H1 (cell line): ENCODE measurements at regions of chr19 and their contacts with region 1.

Region 1: DNA sequence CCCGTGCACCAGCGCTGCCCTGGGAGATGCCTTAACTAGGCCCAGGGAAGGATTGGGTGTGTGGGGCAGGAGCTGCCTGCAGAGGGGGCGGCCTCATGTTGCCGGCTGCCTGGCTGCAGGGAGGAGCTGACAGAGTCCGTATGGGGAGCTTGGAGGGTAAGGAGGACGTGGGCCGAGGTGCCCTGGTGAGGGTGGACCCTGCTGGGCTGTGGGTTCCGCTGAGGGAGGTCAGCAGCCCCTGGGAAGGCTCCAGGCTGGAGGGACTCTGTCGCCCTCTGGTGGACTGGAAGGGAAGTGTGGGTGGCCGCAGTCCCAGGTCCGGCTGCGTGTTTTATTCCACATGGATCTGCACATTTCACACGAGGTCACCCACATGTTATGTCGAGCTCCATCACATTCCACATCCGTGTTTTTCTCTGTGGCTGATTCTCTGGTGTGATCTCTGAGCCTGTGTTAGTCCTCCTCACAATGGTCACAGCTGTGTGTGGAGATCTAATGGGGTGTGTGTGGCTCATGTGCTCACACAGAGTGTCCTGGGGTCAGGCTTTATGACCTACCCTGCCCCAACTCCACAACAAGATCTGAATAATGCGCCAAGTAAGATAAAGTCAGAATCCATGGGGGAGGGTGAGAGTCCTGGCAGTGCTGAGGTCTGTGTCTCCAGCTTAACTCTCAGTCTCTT is 1.8 kb upstream of the CEACAM8 start:
- DNase-seq: peak in 1 of 2 experiments; percentile 82
- H3K4me3 ChIP-seq: no peak overlapping the region
- H3K27ac ChIP-seq: no peak overlapping the region
- H3K4me1 ChIP-seq: no peaks in the 10 kb centered on the region
- H3K27me3 ChIP-seq: 0 out of 7 replicates have a peak, but pooled peaks cover 0 to 2% (median 0%) of the 10 kb centered on the region in 4 experiments
- CTCF ChIP-seq: peak; percentile 81 to 98 (median 98)
- EP300 ChIP-seq: no peak
- POLR2A ChIP-seq: no peak
- RAD21 ChIP-seq: peak; percentile 71 to 78

Region 2: DNA sequence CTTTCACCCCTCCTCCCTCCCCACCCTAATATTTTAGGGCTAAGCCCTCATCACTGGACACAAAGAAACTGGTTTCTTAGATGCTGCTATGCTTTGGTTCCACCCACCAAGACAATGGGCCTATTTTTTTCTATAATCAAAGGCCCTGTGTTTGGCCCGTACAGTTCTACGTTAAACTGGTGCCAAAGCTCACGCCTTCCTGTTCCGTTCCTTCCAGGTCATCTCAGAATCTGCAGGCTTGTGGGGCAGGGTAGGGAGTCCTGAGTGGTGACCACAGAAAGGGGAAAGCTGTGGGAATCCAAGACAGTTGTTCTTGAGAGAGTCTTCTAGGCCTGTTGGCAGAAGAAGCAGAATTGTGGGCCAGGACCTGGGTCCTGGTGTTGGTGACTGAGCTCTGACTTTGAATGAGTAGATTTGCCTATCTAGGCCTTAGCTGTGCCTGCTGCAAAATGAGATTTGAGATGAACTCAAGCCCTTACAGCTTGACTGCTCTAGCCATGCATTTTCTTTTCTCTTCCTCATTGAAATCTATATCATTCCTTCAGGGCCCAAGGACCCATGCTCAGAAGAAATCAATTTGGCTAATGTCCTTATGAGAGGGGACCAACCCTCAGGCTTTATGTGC is 134.7 kb before region 1 on chr19:
- CTCF ChIA-PET with region 1: no interaction called
- POLR2A ChIA-PET with region 1: no interaction called
- DNase-seq: no peak
- H3K4me3 ChIP-seq: no peak overlapping the region
- H3K27ac ChIP-seq: no peak overlapping the region
- H3K4me1 ChIP-seq: peaks cover 0 to 2% (median under 1%) of the 10 kb centered on the region in 4 experiments; a peak in 3 of 7 replicates
- H3K27me3 ChIP-seq: no peaks in the 10 kb centered on the region
- CTCF ChIP-seq: no peak
- EP300 ChIP-seq: no peak
- POLR2A ChIP-seq: no peak
- RAD21 ChIP-seq: no peak

Region 3: GRCh38 chr19:42519108-42519507 is 77.4 kb before region 1 on chr19:
- CTCF ChIA-PET with region 1: no interaction called
- POLR2A ChIA-PET with region 1: no interaction called
- DNase-seq: peak in 1 of 2 experiments; percentile 29
- H3K4me3 ChIP-seq: no peak overlapping the region
- H3K27ac ChIP-seq: no peak overlapping the region
- H3K4me1 ChIP-seq: no peaks in the 10 kb centered on the region
- H3K27me3 ChIP-seq: no peaks in the 10 kb centered on the region
- CTCF ChIP-seq: no peak
- EP300 ChIP-seq: no peak
- POLR2A ChIP-seq: no peak
- RAD21 ChIP-seq: no peak

Region 4: GRCh38 chr19:42563352-42564210 is 33.0 kb before region 1 on chr19:
- CTCF ChIA-PET with region 1: interaction called, 34 read pairs
- POLR2A ChIA-PET with region 1: no interaction called
- DNase-seq: no peak
- H3K4me3 ChIP-seq: no peak overlapping the region
- H3K27ac ChIP-seq: no peak overlapping the region
- H3K4me1 ChIP-seq: peaks cover 2 to 8% (median 3%) of the 10 kb centered on the region in 4 experiments; a peak in 6 of 7 replicates
- H3K27me3 ChIP-seq: no peaks in the 10 kb centered on the region
- CTCF ChIP-seq: peak in 2 of 3 experiments; percentile 74 to 84; a peak in 3 of 4 replicates
- EP300 ChIP-seq: no peak
- POLR2A ChIP-seq: no peak
- RAD21 ChIP-seq: peak; percentile 72 to 75

Region 5: DNA sequence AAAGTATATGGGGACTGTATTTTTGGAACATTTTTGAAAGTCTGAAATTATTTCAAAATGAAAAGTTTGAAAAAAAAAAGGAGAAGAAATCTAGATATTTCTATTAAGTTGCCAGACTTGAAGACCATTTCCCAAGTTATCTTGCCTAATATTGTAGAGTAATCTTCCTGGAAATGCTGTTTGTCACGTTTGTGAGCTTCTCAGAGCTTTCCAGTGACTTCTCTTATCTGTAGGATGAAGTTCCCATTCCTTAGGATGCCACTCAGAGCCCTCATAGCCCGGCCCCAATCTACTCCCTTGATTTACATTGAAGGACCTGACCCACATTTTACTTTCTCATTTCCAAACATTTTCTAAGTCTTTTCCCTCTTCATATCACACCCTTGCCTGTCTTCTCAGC is 25.4 kb before region 1 on chr19:
- CTCF ChIA-PET with region 1: interaction called, 34 read pairs
- POLR2A ChIA-PET with region 1: no interaction called
- DNase-seq: no peak
- H3K4me3 ChIP-seq: no peak overlapping the region
- H3K27ac ChIP-seq: no peak overlapping the region
- H3K4me1 ChIP-seq: no peaks in the 10 kb centered on the region; a peak in 1 of 7 replicates
- H3K27me3 ChIP-seq: no peaks in the 10 kb centered on the region
- CTCF ChIP-seq: no peak
- EP300 ChIP-seq: no peak
- POLR2A ChIP-seq: no peak
- RAD21 ChIP-seq: no peak

Region 6: DNA sequence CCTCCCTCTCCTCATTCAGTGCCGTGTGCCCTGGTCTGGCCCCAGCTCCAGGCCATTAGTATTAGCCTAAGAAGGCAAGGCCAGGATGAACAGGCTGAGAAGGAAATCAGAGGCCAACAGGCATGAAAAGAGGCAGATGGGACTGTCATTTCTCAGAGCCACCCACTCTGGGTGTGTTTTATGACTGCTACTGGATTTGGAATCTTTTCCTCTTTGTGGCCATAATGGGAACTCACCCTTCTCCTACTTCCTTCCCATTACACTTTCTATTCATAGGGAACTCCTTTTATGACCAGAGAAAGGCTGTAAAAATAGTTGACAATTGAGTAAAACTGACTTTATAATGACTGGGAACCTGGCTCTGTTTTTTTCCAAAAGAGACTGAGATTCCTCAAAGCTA is 19.5 kb before region 1 on chr19:
- CTCF ChIA-PET with region 1: interaction called, 19 read pairs
- POLR2A ChIA-PET with region 1: interaction called, 3 read pairs
- DNase-seq: no peak
- H3K4me3 ChIP-seq: no peak overlapping the region
- H3K27ac ChIP-seq: no peak overlapping the region
- H3K4me1 ChIP-seq: no peaks in the 10 kb centered on the region; a peak in 1 of 7 replicates
- H3K27me3 ChIP-seq: no peaks in the 10 kb centered on the region
- CTCF ChIP-seq: no peak
- EP300 ChIP-seq: no peak
- POLR2A ChIP-seq: no peak
- RAD21 ChIP-seq: no peak

Region 7: DNA sequence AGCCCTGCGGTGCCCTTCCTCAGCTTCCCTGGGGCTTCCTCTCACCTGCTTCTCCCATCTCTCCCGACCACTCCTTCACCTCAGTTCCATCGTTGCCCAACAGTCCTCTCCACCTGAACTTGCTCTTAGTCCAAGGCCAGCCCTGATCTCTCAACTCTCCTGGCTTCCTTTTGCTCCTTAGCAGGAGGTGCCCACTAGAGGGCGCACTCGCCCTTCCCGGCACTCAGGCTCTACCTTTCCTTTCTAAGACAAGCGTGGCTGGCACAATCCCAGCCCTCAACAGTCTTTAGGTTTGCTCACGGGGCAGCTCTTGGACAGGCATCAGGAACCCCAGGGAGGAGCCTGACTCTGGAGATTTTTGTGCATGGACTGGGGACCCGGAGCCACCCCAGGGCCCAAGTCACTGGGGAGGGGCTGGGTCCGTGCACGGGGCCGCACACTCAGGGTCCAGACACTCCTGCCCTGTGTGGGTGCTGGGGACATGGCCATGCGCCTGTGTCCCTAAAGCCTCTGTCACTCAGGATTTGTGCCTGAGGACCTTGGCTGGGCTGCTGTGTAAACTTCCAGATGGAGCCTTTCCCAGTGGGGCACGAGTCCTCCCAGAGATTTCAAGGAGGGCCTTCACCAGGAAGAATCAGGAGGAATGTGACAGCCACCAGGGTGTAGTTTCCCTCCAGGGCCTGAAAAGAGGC is 10.3 kb after region 1 on chr19:
- CTCF ChIA-PET with region 1: interaction called, 11 read pairs
- POLR2A ChIA-PET with region 1: no interaction called
- DNase-seq: peak; percentile 44 to 88
- H3K4me3 ChIP-seq: no peak overlapping the region
- H3K27ac ChIP-seq: no peak overlapping the region
- H3K4me1 ChIP-seq: no peaks in the 10 kb centered on the region
- H3K27me3 ChIP-seq: no peaks in the 10 kb centered on the region; a peak in 1 of 7 replicates
- CTCF ChIP-seq: peak; percentile 79 to 90 (median 84)
- EP300 ChIP-seq: no peak
- POLR2A ChIP-seq: no peak
- RAD21 ChIP-seq: peak; percentile 77 to 78

Region 8: DNA sequence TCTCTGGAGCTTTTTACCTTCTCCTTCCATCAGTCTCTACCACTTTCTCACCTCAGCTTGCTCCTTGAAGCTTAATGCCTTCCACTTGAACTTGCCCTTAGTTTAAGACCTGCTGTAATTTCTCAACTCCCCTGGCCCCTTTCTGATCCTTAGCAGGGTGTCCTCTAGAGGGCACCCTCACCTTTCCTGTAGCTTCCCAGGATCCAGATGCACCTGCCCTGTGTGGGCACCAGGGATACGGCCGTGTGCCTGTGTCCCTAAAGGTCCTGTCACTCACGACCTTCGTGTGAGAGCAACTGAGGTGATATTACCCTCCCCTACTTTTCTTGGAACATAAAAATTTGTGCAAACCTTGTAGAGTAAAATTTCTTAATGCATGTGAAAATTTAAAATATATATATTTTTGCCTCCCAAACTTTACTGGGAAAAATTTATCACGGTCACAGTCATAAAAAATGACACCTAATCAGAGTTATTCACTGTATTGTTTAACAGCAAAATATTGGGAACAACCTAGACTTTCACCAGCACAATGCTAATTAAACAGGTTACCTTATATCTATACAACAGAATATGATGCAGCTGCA is 97.3 kb after region 1 on chr19:
- CTCF ChIA-PET with region 1: no interaction called
- POLR2A ChIA-PET with region 1: no interaction called
- DNase-seq: no peak
- H3K4me3 ChIP-seq: no peak overlapping the region
- H3K27ac ChIP-seq: no peak overlapping the region
- H3K4me1 ChIP-seq: no peaks in the 10 kb centered on the region
- H3K27me3 ChIP-seq: no peaks in the 10 kb centered on the region
- CTCF ChIP-seq: peak; percentile 14 to 43 (median 32)
- EP300 ChIP-seq: no peak
- POLR2A ChIP-seq: no peak
- RAD21 ChIP-seq: peak; percentile 26 to 47; a peak in 3 of 4 replicates